Activated CD4-positive, alpha-beta T cell treated with anti-CD3 and anti-CD28 coated beads, Interleukin-2, amount 10 ng/mL, durations not matched to agents 24 days and 14 days (primary cell): ENCODE measurements at regions of chr7 and their contacts with region 1.

Region 1: DNA sequence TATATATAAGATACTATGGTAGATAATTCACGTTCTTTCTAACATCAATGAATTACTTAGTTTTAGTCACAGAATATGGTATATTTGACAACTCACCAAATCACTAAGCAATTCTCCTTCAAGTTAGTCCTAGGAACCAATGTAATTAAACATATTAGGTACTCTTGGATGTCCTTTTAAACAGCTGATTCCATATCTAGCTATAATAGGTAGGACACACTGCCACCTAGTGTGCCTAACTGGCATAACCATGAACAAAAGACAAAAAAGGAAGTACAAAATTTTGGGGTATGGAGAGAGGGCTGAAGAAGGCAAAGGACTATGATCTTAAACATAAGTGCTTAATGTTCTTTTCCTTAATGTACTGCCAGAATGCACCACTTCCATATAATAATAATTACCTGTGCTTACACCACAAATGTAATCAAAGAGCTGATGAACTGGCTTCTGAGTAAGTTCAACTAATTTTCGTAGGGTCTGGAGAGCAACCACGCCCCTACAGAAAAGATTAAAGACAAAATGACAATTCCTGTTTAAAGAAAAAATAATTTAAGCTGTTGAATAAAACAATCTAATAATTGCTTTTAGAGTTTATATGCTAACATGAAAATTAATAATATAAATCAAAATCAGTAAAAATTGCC is 28.7 kb downstream of the PNPLA8 start:
- DNase-seq: peak; percentile 84
- H3K4me3 Mint-ChIP-seq: no peak overlapping the region
- H3K27ac Mint-ChIP-seq: no peak overlapping the region
- H3K4me1 Mint-ChIP-seq: no peaks in the 10 kb centered on the region
- H3K27me3 Mint-ChIP-seq: no peaks in the 10 kb centered on the region

Region 2: GRCh38 chr7:108114117-108114841 is 382.9 kb before region 1 on chr7:
- intact Hi-C with region 1: loop called (anchors 5 kb)
- DNase-seq: peak; percentile 67
- H3K4me3 Mint-ChIP-seq: no peak overlapping the region
- H3K27ac Mint-ChIP-seq: no peak overlapping the region
- H3K4me1 Mint-ChIP-seq: no peaks in the 10 kb centered on the region
- H3K27me3 Mint-ChIP-seq: peaks cover 4% of the 10 kb centered on the region

Region 3: DNA sequence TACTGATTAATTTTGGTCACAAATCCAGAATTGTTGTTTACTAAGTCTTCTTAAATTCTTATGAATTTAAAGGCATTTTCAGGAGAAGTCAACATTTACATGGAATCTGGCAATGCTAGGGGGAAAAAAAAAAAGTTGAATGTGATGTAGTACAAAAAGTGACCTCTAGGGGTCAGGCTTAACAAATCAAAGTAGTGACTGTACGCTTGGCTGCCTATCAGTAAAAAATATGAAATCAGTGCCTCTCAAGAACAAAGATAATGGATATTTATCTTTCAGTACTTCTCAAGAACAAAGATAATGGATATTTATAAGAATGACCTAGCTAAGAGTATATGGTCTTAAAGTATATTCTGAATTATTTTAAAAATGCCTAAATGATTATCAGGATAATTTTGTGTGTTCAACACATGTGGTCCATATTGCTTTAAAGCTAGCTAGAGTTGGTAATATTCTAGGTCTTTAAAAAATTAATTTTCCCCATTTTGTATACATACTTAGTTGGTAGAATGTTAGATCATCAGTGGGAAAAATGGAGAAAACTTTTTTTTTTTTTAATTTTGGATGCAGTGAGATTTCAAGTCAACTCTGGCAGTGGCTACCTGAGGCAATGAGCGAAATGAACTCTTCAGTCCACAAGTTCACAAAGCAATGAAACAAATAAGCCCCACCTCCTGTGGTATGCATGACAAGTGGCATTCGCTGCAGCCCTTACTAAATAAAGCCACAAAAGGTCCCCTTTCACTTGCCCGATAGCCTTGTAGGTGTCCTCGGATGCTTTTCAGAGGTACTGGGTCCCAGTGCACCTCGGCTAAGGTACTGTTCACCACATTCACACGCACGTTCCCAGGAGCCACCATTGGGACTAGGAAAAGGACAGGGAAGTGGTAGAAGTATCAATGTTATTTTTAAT is 315.9 kb before region 1 on chr7:
- intact Hi-C with region 1: loop called (anchors 1 kb)
- DNase-seq: peak; percentile 70
- H3K4me3 Mint-ChIP-seq: no peak overlapping the region
- H3K27ac Mint-ChIP-seq: no peak overlapping the region
- H3K4me1 Mint-ChIP-seq: no peaks in the 10 kb centered on the region
- H3K27me3 Mint-ChIP-seq: no peaks in the 10 kb centered on the region

Region 4: DNA sequence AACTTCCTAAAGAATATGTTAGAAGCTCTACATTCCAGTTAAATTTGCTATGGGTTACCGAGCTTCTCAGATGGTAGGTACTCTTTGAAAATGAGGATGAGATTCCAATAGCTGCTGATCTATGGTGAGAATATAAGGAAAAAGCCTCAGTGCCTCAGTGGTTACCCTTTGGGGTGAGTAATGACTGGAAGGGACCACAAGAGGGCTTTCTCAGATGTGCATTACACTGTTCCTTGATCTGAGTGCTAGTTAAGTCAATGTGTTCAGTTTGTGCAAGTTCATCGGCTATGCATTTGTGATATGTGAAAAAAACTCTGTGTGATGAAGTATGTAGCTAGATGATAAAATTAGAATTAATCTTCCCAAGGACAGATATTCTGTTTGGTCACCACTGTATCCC is 44.5 kb before region 1 on chr7:
- intact Hi-C with region 1: loop called (anchors 1 kb)
- DNase-seq: peak; percentile 61
- H3K4me3 Mint-ChIP-seq: no peak overlapping the region
- H3K27ac Mint-ChIP-seq: no peak overlapping the region
- H3K4me1 Mint-ChIP-seq: peaks cover 10% of the 10 kb centered on the region
- H3K27me3 Mint-ChIP-seq: peaks cover 59% of the 10 kb centered on the region